CD4-positive, alpha-beta T cell (primary cell): ENCODE measurements at regions of chr15 and their contacts with region 1.

Region 1: DNA sequence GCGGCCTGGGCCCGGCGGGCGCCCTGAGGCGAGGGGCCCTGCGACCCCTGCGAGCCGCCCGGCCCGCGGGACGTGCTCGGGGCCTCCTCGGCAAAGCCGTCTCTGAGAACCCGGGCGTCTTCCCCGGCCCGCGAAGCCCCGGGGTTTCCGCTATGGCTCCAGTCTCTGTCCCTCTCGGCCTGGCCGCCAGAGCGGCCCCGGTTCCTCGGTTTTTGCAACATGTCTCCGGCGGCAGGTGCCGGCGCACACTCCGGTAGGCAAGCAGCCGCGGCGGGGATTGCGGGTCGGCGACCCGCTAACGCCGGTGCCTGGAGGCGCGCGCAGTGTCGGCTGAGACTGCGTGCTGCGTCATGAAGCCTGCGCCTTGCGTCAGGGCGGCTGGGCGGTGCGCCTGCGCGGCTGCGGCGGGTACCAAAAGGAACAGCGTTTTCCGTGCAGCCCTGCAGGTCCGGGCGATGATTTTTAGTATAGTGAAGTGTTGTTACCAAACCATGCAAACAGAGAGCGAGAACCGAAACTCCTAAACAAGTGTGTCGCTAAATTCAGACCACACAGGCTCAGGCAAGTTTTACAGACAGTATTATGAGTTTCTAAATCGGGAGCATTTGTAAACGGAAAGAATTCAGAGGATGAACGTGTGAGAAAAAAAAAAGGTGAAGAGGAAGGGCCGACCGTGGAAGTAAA is at the start of gene NSMCE3:
- DNase-seq: peak; percentile 82 to 96 (median 90)
- ATAC-seq: peak; percentile 78
- H3K4me3 ChIP-seq: peak within 1 kb of the TSS; percentile 81
- H3K4me3 Mint-ChIP-seq: peak within 1 kb of the TSS; percentile 99
- H3K27ac ChIP-seq: peak within 1 kb of the TSS; percentile 88 to 94
- H3K27ac Mint-ChIP-seq: peak within 1 kb of the TSS; percentile 97
- H3K4me1 ChIP-seq: peaks cover 14% of the 10 kb centered on the region
- H3K4me1 Mint-ChIP-seq: peaks cover 63% of the 10 kb centered on the region
- H3K27me3 ChIP-seq: no peaks in the 10 kb centered on the region
- H3K27me3 Mint-ChIP-seq: no peaks in the 10 kb centered on the region
- CTCF ChIP-seq: no peak
- total RNA-seq, gene NSMCE3: 46.1 to 46.9 TPM

Region 2: DNA sequence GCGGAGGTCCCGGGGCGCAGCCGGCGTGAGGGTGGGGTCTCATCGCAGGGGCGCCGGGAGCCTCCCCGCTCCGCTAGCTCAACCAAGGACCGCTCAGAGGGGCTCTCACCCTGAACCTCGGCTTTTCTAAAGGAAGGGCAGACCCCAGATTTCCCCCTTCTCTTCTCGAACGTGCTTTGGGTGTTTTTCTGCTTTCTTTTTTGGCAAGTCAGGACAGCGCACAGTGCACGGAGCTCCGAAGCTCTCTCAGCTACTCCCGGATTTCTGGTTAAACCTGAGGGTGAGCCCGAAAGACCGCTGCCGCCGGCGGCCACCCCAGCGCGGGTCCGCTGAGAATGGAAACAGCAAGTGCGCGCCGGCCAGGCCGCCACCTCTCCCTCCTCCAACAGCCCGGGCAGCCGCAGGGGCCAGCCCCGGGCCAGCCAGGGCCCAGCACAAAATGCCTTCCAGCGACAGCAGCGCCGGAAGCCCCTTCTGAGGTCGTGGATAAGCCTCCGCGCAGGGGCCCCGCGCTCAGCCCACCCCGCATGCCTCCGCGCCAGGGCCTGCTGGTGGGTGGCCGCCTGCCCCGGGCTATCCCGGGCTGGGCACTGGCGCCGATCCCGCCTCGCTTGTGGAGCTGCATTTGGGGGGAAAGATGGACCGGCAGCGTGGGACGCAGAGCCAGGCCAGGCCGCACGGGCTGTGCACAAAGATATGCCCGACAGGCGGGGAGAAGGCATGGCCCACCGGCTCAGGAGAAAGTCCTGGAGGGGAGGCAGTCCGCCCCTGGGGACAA is 1162.3 kb before region 1 on chr15:
- CTCF ChIA-PET with region 1: no interaction called
- POLR2A ChIA-PET with region 1: no interaction called
- intact Hi-C with region 1: loop called in 1 of 2 experiments (anchors 10 kb)
- DNase-seq: peak in 2 of 14 experiments; percentile 28 to 42
- ATAC-seq: peak; percentile 52
- H3K4me3 ChIP-seq: peak overlapping the region; percentile 55
- H3K4me3 Mint-ChIP-seq: peak overlapping the region; percentile 91
- H3K27ac ChIP-seq: no peak overlapping the region
- H3K27ac Mint-ChIP-seq: no peak overlapping the region
- H3K4me1 ChIP-seq: peaks cover 20% of the 10 kb centered on the region
- H3K4me1 Mint-ChIP-seq: peaks cover 10% of the 10 kb centered on the region
- H3K27me3 ChIP-seq: peaks cover 15 to 28% of the 10 kb centered on the region in 2 experiments
- H3K27me3 Mint-ChIP-seq: peaks cover 25% of the 10 kb centered on the region
- CTCF ChIP-seq: no peak

Region 3: DNA sequence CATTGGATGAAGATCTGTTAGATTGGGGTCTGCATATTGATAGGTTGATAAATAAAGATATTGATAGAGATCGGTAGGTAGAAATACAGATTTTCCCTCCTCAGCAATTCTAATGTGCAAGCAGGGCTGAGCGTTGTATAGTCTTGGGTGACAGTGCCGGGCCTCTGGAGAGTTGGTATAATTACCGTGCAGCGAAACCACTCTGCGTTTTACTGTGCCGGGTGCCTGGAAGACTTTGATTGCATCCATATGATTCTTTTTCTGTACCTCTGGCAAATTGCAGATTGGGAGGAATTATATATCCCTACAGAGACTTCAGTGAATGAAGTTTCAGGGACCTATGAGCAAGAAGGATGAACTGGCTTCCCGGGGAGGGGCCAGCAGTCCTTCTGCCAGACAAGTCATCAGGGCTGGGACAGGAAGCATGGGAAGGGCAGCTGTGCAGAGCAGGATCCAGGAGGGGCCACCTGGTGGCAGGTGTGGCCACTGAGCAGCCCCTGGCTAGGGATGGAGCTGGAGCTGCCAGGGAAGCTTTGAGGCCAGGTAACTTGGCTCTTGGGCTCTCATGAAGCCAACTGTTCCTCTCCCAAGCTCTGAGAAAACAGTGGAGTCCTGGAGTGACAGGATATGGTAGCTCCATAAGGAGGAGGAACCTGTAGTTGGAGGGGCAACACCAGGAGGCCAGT is 251.4 kb before region 1 on chr15:
- CTCF ChIA-PET with region 1: no interaction called
- POLR2A ChIA-PET with region 1: no interaction called
- intact Hi-C with region 1: loop called in 1 of 2 experiments (anchors 10 kb)
- DNase-seq: no peak
- ATAC-seq: no peak
- H3K4me3 ChIP-seq: no peak overlapping the region
- H3K4me3 Mint-ChIP-seq: no peak overlapping the region
- H3K27ac ChIP-seq: no peak overlapping the region
- H3K27ac Mint-ChIP-seq: peak overlapping the region; percentile 40
- H3K4me1 ChIP-seq: peaks cover 6% of the 10 kb centered on the region
- H3K4me1 Mint-ChIP-seq: peaks cover 65% of the 10 kb centered on the region
- H3K27me3 ChIP-seq: no peaks in the 10 kb centered on the region
- H3K27me3 Mint-ChIP-seq: no peaks in the 10 kb centered on the region
- CTCF ChIP-seq: no peak